Activated CD4-positive, alpha-beta T cell treated with anti-CD3 and anti-CD28 coated beads for 36 hours (primary cell): ENCODE measurements at regions of chr12 and their contacts with region 1.

Region 1: DNA sequence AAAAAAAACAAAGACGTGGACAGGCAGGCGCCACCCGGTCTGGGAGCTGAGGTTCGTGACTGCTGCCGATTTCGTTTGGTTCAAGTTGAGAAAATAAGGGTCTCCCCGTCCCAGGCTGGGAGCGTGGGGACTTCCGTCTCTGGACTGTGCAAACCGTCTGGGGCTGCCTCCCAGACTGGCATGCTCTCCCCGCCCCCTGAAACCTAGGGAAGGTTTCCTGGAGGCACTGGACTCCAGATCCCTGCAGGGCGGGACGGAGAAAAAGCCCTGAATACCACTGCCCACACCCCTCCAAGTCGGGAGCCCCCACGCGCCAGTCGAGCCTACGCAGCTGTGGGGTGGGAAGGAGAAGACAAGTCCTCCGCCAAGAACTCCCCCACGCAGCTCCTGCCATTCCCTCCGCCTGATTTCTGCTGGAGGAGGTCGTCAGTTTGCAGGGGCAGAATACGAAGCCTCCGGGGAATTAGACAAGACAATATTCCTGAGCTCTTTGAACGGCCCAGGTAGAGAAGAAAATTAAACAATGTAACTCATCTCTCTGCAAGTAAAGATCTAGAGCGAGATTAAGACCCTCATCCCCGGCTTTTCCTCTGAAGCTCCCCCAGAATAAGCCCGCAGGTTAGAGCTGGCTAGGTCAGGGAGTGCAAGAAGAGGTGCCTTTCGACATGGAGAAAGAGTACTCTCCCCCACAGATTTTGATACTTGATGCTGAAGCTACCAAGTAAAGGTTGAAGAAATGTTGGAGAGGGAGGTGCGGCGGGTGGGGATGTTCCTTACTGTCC is 10.4 kb upstream of the HOXC13 start:
- DNase-seq: no peak
- ATAC-seq: no peak
- H3K4me3 Mint-ChIP-seq: no peak overlapping the region
- H3K27ac Mint-ChIP-seq: no peak overlapping the region
- H3K4me1 Mint-ChIP-seq: no peaks in the 10 kb centered on the region
- H3K27me3 Mint-ChIP-seq: peaks cover 77% of the 10 kb centered on the region

Region 2: DNA sequence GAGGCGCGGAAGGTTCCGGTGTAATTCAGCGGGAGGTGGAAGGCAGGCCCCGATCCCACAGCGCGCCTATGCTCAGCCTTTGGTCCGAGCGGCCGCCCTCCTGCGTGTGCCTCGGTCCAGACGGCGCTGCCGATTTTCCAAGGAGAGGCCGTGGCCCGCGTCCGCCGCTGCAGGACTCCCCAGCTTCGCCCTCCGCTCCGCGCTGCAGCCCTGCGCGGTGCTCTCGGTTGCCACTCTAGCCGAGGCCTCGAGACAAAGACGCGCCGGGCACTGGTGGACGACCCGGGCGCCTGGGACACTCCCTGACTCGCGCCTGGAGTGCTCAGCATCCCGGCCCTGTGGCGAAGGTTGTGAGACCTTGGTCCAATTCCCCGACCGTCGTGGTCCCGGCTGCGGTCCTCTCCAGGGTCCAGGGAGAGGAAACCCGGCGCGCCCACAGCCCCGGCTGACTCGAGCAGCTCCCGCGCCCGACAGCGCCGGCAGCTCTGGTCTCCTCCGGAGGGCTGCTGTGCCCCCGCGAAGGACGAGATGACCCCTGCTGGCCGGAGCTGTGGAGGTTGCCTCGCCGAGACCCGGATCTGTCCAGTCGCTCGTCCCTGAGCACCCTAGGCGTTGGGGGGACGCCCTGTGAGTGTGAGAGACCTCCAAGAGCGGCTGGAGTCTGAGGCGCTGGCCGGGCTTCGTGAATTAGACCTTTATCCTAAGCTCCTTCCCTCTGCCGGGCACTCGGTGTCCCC is 32.9 kb after region 1 on chr12:
- CTCF ChIA-PET with region 1: no interaction called
- POLR2A ChIA-PET with region 1: interaction called, 3 read pairs
- intact Hi-C with region 1: loop called in 1 of 2 experiments (anchors 5 kb)
- DNase-seq: no peak
- ATAC-seq: no peak
- H3K4me3 Mint-ChIP-seq: no peak overlapping the region
- H3K27ac Mint-ChIP-seq: no peak overlapping the region
- H3K4me1 Mint-ChIP-seq: peaks cover 25% of the 10 kb centered on the region
- H3K27me3 Mint-ChIP-seq: peaks cover 80% of the 10 kb centered on the region